A673 (cell line): ENCODE measurements at regions of chr3 and their contacts with region 1.

Region 1: DNA sequence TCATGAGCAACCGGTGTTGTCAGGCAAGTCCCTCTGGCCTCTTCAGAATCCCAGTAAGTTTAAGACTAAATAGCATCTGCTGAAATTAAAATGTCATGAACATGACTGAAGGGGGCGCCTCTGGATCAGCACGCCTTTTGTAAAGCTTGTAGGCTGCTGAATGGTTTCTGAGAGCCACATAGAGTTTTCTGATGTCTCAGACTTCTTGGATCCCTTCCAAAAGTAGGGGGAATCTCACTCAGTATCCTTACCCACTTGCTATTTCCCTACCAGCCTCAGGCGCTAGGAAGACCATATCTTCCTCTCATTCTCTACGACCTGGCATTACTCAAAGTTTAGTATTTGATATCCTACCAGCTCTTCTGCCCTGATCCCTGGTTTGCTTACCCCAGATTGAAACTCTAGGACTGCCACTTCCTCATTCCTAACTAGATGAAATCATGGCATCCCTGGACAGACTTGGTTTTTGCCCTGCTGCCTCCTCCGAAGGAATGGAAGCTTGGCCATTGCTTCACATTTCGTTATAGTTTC is 62.7 kb upstream of the CD47 start:
- DNase-seq: peak; percentile 89
- H3K4me3 ChIP-seq: no peak overlapping the region
- H3K27ac ChIP-seq: no peak overlapping the region
- H3K4me1 ChIP-seq: no peaks in the 10 kb centered on the region
- H3K27me3 ChIP-seq: no peaks in the 10 kb centered on the region
- CTCF ChIP-seq: peak; percentile 79

Region 2: GRCh38 chr3:108406661-108407206 is 253.2 kb after region 1 on chr3:
- CTCF ChIA-PET with region 1: no interaction called
- POLR2A ChIA-PET with region 1: no interaction called
- intact Hi-C with region 1: loop called (anchors 1 kb)
- DNase-seq: peak; percentile 72
- H3K4me3 ChIP-seq: no peak overlapping the region
- H3K27ac ChIP-seq: no peak overlapping the region
- H3K4me1 ChIP-seq: peaks cover 6% of the 10 kb centered on the region
- H3K27me3 ChIP-seq: no peaks in the 10 kb centered on the region
- CTCF ChIP-seq: peak; percentile 83

Region 3: DNA sequence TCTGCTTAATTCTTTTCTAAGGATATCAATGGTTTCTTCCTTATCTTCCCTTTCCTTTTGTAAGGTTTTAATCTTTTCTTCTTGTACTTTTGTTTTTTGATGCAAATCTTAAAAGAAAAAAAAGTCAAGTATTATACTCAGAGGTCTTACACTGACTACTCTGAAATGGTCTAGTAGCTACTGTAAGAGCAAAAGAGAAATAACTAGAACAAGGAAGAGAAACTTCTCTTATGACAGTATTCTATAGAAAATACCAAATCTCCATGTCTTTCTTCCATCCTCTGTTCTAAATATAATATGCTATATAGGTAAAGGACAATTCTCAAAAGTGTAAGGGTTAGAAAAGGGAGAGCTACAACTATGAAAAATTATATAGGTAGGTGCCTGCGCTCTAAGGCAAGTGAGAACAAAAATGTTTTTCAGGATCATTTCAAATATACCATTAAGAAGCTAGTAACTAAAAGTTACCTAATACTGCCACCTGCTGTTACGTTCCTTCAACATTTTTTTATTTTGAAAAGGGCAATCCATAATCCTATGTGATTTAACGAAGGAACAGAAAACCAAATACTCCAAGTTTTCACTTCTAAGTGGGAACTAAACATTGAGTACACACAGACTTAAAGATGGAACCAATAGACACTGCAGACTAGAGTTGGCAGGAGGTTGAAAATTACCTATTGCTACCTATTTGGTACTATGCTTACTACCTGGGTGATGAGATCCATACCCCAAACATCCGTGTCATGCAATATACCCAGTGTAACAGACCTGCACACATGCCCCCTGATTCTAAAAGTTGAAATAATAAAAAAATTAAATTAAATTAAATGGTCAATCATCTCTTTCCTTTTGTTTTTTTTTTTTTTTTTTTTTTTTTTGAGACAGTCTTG is 399.0 kb after region 1 on chr3:
- CTCF ChIA-PET with region 1: interaction called, 3 read pairs
- POLR2A ChIA-PET with region 1: no interaction called
- intact Hi-C with region 1: loop called (anchors 10 kb)
- DNase-seq: peak; percentile 69
- H3K4me3 ChIP-seq: no peak overlapping the region
- H3K27ac ChIP-seq: no peak overlapping the region
- H3K4me1 ChIP-seq: peaks cover 13% of the 10 kb centered on the region
- H3K27me3 ChIP-seq: no peaks in the 10 kb centered on the region
- CTCF ChIP-seq: peak; percentile 58